ENCODE measurements at regions of chr19 and their contacts with region 1.

Region 1: DNA sequence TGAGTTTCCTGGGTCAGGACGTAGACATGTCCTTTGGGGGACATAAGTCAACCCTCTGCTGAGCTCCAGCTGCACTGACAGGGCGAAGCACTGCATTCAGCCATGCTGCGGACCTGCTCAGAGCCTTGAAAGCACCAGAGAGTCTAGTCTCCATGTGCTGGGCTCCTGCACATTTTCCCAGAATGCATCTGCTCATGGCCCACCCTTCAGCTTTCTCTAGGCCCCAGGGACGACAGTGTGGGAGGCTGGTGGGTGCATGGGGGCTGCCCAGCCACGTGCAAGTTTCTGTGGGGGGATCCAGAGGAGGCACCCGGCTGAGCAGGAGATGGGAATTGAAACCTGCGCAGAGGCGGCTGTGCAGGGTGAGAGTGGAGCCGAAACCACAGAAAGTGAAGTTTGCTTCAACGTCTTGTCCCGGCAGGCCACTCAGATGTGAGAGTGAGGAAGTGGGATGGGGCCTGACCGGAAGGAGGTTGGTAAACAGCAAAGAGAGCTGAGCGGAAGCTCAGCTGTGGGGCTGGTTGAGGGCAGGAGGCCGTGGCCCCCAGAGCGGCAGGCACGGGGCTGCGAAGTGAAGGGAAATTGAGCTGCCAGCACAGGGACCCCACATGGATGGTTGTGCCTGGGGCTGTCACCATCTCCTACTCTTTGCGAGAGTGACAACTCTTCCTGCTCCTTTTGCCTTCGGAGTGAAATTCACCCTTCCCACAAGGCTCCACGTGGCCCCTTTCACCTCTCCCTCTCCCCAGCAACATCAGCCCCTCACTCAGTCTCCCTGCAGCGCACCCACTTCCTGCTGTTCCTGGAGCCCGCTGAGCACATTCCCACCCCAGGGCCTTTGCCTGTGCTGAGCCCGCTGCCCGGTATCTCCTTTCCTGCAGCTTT is 11.8 kb downstream of the PGLS start:
- DNase-seq: peak; percentile 78 to 97 (median 95)
- H3K4me3 ChIP-seq: peak overlapping the region in 5 of 7 experiments; percentile 6 to 55 (median 31)
- H3K27ac ChIP-seq: peak overlapping the region; percentile 0 to 32
- H3K4me1 ChIP-seq: peaks cover 4 to 44% (median 28%) of the 10 kb centered on the region in 4 experiments
- H3K27me3 ChIP-seq: no peaks in the 10 kb centered on the region

Region 2: DNA sequence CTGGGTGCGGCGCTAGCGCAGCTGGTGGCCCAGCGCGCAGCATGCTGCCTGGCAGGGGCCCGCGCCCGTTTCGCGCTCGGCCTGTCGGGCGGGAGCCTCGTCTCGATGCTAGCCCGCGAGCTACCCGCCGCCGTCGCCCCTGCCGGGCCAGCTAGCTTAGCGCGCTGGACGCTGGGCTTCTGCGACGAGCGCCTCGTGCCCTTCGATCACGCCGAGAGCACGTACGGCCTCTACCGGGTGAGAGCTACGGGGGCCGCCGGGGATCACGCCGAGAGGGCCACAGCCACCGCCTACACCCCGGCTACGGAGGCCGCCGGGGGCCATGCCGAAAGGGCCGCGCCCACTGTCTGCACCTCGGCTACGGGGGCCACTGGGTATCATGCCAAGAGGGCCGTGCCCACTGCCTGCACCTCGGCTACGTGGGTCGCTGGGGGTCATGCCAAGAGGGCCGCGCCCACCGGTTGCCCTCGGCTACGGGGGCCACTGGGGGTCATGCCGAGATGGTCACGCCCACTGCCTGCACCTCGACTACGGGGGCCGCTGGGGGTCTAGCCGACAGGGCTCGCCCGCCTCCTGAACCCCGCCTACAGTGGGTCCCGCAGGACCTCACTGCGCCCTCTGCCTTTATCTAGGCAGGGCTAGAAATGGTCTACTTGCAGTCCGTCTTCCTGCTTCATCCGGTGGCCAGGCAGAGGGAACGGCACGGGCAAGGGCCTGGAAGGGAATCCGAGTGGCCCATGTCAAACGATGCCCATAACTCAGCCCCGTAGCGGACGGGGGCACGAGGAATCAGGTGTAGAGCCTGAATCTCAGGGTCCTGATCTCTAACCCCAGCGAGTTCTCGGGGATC is 11.3 kb before region 1 on chr19:
- CTCF ChIA-PET with region 1: interaction called, 9 read pairs
- POLR2A ChIA-PET with region 1: interaction called, 13 read pairs
- DNase-seq: peak; percentile 99
- H3K4me3 ChIP-seq: peak overlapping the region; percentile 76 to 93 (median 86)
- H3K27ac ChIP-seq: peak overlapping the region; percentile 80 to 91
- H3K4me1 ChIP-seq: peaks cover 6 to 30% (median 18%) of the 10 kb centered on the region in 4 experiments
- H3K27me3 ChIP-seq: no peaks in the 10 kb centered on the region

Region 3: DNA sequence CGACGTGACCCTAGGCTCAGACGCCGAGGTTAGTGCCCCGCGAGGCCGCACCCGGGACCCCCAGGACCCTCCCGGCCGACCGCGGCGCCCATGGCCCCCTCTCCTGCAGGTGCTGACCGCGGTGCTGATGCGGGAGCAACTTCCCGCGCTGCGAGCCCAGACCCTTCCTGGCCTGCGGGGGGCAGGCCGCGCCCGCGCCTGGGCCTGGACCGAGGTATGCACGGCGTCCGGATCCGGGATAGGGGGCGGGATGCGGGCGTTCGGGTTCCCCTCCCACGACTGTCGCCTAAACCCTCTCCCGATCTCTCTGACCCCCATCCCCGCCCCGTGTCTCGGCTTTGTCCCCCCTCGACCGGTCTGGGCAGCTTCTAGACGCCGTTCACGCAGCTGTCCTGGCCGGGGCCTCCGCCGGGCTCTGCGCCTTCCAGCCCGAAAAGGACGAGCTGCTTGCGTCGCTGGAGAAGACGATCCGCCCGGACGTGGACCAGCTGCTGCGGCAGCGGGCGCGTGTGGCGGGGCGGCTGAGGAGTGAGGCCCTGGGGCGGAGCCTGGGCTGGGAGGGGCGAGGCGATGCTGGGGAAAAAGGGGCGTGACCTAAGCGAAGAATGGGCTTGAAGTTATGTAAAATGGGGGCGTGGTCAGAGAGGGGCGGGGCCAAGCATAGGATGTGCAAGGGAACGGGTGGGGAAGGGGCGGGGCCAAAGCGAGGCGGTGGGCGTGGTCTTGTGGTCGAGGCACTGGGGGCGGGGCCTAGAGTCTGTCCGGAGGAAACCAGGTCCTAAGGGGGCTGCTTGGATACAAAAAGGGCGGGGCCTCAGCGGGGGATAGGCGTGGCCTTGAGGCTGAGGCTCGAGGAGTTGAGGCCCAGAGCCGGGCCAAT is 16.2 kb after region 1 on chr19:
- CTCF ChIA-PET with region 1: interaction called, 16 read pairs
- POLR2A ChIA-PET with region 1: interaction called, 10 read pairs
- DNase-seq: peak; percentile 98 to 99 (median 99)
- H3K4me3 ChIP-seq: peak overlapping the region; percentile 16 to 75 (median 65)
- H3K27ac ChIP-seq: no peak overlapping the region
- H3K4me1 ChIP-seq: peaks cover 0 to 13% (median 12%) of the 10 kb centered on the region in 4 experiments
- H3K27me3 ChIP-seq: no peaks in the 10 kb centered on the region

Measured in common myeloid progenitor, CD34-positive (primary cell).